ENCODE measurements at regions of chr4 and their contacts with region 1.

Region 1: GRCh38 chr4:186669159-186669731 is 54.4 kb downstream of the FAT1 start:
- DNase-seq: peak in 1 of 2 experiments; percentile 38
- ATAC-seq: peak; percentile 61 to 62; a peak in 4 of 6 replicates
- H3K4me3 ChIP-seq: no peak overlapping the region
- H3K27ac ChIP-seq: peak overlapping the region; percentile 36 to 79; a peak in 4 of 6 replicates
- H3K4me1 ChIP-seq: peaks cover 66% of the 10 kb centered on the region
- CTCF ChIP-seq: peak; percentile 55
- EP300 ChIP-seq: no peak
- POLR2A ChIP-seq: no peak
- RAD21 ChIP-seq: peak; percentile 59 to 68

Region 2: GRCh38 chr4:186719925-186720694 is 50.9 kb after region 1 on chr4:
- CTCF ChIA-PET with region 1: interaction called, 10 read pairs
- POLR2A ChIA-PET with region 1: interaction called, 3 read pairs
- DNase-seq: peak in 1 of 2 experiments; percentile 81
- ATAC-seq: no peak
- H3K4me3 ChIP-seq: no peak overlapping the region
- H3K27ac ChIP-seq: no peak overlapping the region
- H3K4me1 ChIP-seq: no peaks in the 10 kb centered on the region
- CTCF ChIP-seq: peak; percentile 35; the same call in 2 of the 3 replicates
- EP300 ChIP-seq: no peak
- POLR2A ChIP-seq: no peak
- RAD21 ChIP-seq: peak; percentile 21 to 51; a peak in 3 of 5 replicates

Measured in A549 (cell line).